ENCODE measurements at regions of chr19 and their contacts with region 1.

Region 1: DNA sequence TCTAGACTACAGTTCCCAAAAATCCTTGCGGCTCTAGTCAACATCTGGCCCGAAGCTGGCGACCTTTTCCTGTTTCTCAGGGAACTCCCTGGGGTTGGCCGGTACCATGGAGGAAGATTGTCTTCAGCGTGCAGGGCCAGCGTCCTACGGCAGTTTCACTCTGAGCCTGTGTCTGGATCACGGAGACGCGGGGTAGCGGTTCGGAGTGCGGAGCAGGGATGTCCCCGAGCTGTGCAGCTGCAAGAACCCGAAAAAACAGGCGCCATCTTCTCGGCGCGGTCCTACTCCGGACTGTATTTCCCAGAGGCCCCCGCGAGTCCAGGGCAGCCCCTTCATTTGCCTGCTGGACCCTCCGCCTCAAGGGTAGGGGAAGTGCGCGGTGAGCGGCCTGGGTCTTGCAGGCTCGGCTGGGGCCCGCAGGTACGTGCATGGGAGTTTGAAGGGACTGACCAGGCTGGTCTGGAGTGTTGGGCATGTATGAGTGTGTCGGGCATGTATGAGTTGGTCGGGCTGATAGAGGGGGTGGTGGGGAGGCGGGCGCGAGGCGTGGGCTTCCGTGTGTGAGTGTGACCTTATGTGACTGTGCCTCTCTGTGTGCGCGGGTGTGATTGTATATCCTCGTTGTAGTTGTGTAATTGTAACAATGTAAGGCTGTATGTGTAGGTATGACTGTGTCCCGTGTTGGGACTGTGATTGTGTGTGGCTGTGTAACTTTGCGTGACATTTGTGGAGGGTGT is at the start of gene ZNF383:
- DNase-seq: peak; percentile 86
- H3K4me3 ChIP-seq: peak within 1 kb of the TSS; percentile 50 to 73
- H3K27ac ChIP-seq: peak within 1 kb of the TSS; percentile 82 to 92
- H3K4me1 ChIP-seq: no peaks in the 10 kb centered on the region
- H3K27me3 ChIP-seq: no peaks in the 10 kb centered on the region
- CTCF ChIP-seq: peak in 1 of 4 experiments; percentile 5
- POLR2A ChIP-seq: peak; percentile 32
- total RNA-seq, gene ZNF383: 6.6 to 7.8 TPM

Region 2: DNA sequence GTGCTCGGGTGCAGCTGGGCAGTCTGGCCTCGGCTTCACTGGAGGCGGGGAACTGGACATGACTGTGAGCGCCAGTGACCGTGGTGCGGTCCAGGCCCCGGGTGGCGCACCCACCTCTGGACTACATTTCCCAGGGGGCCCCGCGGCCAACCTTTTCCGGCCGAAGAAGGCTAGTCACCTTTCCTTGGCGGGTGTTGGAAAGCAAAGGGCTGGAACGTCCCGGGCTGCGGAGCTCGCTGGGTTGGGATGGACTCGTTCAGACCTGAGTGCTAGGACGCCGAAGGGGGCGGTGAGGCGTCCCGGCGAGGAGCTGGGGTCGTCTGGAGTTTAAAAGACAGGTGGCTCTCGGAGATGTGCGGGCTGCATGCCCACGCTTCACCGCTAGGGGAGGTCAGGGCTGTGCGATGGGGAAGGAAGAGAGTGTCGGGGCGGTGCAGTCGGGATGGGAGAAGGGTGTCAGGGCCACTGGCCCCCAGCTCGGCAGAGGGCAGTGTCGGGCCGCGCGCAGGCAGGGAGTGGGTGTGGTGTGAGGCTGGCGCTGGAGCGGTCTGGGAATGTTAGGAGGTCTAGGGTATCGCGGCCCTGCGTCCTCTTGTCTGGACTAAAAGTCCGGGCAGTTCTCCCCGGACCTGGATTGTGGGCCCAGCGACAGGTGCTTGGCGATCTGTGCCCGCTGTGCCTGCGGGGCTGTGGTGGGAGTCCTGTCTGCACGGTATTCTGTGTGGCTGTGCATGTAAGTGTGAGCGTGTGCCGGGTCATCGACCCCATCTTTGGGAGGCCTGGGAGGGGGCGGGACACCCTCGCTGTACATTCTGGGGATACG is 244.8 kb before region 1 on chr19:
- intact Hi-C with region 1: loop called (anchors 5 kb)
- DNase-seq: peak; percentile 80
- H3K4me3 ChIP-seq: peak overlapping the region; percentile 51 to 55
- H3K27ac ChIP-seq: peak overlapping the region; percentile 75 to 79
- H3K4me1 ChIP-seq: peaks cover 4% of the 10 kb centered on the region
- H3K27me3 ChIP-seq: no peaks in the 10 kb centered on the region
- CTCF ChIP-seq: peak; percentile 73 to 95 (median 88)
- POLR2A ChIP-seq: no peak

Region 3: GRCh38 chr19:37172368-37173366 is 45.4 kb before region 1 on chr19 and contains the start of gene ZNF585A:
- intact Hi-C with region 1: loop called (anchors 5 kb)
- DNase-seq: peak; percentile 95
- H3K4me3 ChIP-seq: peak within 1 kb of the TSS; percentile 51 to 61
- H3K27ac ChIP-seq: peak within 1 kb of the TSS; percentile 55 to 78
- H3K4me1 ChIP-seq: no peaks in the 10 kb centered on the region
- H3K27me3 ChIP-seq: no peaks in the 10 kb centered on the region
- CTCF ChIP-seq: peak in 3 of 4 experiments; percentile 27 to 45 (median 36)
- POLR2A ChIP-seq: no peak
- total RNA-seq, gene ZNF585A: 5.0 to 8.7 TPM

Region 4: DNA sequence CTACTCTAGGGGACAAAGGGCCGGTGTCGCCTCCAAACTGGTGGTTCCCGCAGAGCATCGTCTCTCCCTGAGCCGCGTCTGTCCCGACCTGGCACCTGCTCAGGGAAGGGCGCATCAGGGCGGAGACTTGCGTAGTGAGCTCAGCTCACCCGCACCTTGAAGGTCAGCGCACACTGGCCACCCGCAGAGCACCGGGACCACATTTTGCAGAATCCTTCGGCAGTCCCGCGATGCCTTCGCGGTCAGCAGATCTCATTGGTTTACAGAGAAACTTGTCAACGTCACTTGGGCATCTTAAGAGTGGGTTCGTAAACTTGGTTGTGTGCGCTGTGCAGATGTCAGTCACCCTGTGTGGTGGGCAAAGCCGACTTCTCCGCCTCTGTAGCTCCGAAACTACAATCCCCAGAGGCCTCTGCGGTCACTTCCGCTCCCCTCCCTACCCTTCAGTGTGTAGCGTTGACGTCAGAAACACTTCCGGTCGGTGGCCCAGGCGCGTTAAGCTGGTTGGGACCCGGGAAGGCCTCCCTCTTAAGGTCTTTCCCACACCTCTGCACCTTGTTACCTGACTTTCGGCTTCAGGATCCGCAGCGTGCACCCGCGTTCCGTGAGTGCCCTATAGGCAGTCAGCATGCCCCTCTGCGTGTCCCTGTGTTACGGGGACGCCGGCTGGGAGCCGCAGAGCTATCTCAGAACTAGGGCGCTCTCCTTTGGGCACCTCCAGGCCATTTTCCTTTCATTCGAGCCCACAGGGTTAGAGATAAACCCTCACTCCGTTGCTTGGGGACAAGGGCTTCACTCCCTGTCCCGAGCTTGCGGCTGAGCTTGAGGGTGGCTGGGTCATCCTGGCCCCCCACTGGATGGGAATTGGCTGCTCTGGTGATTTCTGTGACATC is 116.4 kb after region 1 on chr19:
- intact Hi-C with region 1: loop called (anchors 10 kb)
- DNase-seq: peak; percentile 93
- H3K4me3 ChIP-seq: peak overlapping the region; percentile 63 to 66
- H3K27ac ChIP-seq: peak overlapping the region; percentile 87 to 89
- H3K4me1 ChIP-seq: no peaks in the 10 kb centered on the region
- H3K27me3 ChIP-seq: no peaks in the 10 kb centered on the region
- CTCF ChIP-seq: peak in 1 of 4 experiments; percentile 4
- POLR2A ChIP-seq: peak; percentile 48

Measured in prostate gland (tissue), 2 donors.